MCF 10A (cell line): ENCODE measurements at regions of chr6 and their contacts with region 1.

Region 1: GRCh38 chr6:17381424-17382147 is 11.8 kb upstream of the CAP2 start:
- DNase-seq: no peak
- H3K4me3 Mint-ChIP-seq: no peak overlapping the region
- H3K27ac Mint-ChIP-seq: no peak overlapping the region
- H3K4me1 Mint-ChIP-seq: peaks cover 6% of the 10 kb centered on the region
- H3K27me3 Mint-ChIP-seq: no peaks in the 10 kb centered on the region
- CTCF ChIP-seq: no peak

Region 2: DNA sequence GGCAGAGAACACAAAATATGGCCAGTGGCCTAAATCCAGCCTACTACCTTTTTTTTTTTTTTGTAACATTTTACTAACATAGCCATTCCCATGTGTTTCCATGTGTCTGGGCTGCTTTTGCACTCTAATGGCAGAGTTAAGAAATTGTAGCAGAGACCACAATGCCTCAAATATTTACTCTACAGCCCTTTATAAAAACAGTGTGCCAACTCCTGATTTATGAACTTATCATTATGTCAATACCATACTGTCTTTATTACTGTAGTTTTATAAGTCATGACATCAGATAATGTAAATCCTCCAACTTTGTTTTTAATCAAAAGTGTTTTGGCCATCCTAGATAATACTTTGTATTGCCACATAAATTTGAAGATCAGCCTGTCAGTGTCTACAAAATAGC is 15.6 kb before region 1 on chr6:
- CTCF ChIA-PET with region 1: interaction called, 10 read pairs
- POLR2A ChIA-PET with region 1: no interaction called
- intact Hi-C with region 1: no loop called
- DNase-seq: no peak
- H3K4me3 Mint-ChIP-seq: no peak overlapping the region
- H3K27ac Mint-ChIP-seq: no peak overlapping the region
- H3K4me1 Mint-ChIP-seq: no peaks in the 10 kb centered on the region
- H3K27me3 Mint-ChIP-seq: no peaks in the 10 kb centered on the region
- CTCF ChIP-seq: no peak

Region 3: GRCh38 chr6:17431581-17431980 is 50.0 kb after region 1 on chr6:
- CTCF ChIA-PET with region 1: no interaction called
- POLR2A ChIA-PET with region 1: no interaction called
- intact Hi-C with region 1: no loop called
- DNase-seq: peak; percentile 38
- H3K4me3 Mint-ChIP-seq: no peak overlapping the region
- H3K27ac Mint-ChIP-seq: no peak overlapping the region
- H3K4me1 Mint-ChIP-seq: peaks cover 4% of the 10 kb centered on the region
- H3K27me3 Mint-ChIP-seq: no peaks in the 10 kb centered on the region
- CTCF ChIP-seq: no peak